AG04450 (cell line): ENCODE measurements at regions of chr11 and their contacts with region 1.

Region 1: DNA sequence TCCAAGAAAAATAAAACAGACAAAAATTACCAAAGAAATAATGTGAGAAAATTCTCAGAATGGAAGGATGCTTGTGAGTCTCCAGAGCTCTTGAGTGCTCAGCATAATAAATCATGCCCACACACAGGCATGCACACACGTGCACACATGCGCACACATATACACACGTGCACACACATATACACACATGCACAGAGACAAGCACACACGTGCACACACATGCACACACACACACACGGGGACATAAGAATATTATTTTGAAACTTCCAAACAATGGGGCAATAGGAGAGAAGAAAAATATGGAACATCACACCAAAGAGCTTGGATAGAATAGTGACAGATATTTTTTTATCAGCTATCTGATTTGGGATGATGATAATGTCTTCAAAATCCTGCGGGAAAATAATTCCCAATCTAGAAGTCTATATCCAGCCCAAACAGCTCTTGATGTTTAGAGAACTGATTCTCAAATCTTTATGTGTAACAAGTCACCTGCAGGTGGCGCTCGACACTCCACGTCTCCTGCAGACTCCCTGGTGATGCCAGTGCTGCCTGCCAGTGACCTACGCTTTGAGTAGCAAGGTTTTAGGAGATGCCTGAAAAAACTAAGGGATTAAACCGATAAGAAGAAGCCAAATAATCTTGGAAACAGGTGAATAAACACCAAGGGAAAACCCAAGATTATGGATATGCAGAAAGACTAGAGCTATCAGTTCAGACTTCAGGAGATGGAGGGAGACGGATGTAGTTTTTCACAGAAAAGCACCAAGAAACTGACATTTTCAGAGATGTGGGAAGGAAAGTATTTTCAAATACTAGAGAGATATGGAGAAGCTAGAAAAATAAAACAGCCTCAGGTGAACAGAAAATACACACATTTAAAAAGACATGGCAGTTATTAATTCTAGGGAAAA is 743.6 kb downstream of the ETS1 start:
- DNase-seq: peak; percentile 29
- H3K4me3 ChIP-seq: no peak overlapping the region
- H3K27ac ChIP-seq: no peak overlapping the region
- H3K27me3 ChIP-seq: no peaks in the 10 kb centered on the region
- CTCF ChIP-seq: peak; percentile 73

Region 2: GRCh38 chr11:127412722-127413380 is 430.9 kb before region 1 on chr11:
- CTCF ChIA-PET with region 1: no interaction called
- POLR2A ChIA-PET with region 1: no interaction called
- DNase-seq: no peak
- H3K4me3 ChIP-seq: no peak overlapping the region
- H3K27ac ChIP-seq: no peak overlapping the region
- H3K27me3 ChIP-seq: no peaks in the 10 kb centered on the region
- CTCF ChIP-seq: no peak

Region 3: GRCh38 chr11:127825183-127825582 is 18.6 kb before region 1 on chr11:
- CTCF ChIA-PET with region 1: interaction called, 22 read pairs
- POLR2A ChIA-PET with region 1: no interaction called
- DNase-seq: no peak
- H3K4me3 ChIP-seq: no peak overlapping the region
- H3K27ac ChIP-seq: no peak overlapping the region
- H3K27me3 ChIP-seq: no peaks in the 10 kb centered on the region
- CTCF ChIP-seq: no peak

Region 4: GRCh38 chr11:127862406-127862805 is 18.7 kb after region 1 on chr11:
- CTCF ChIA-PET with region 1: interaction called, 12 read pairs
- POLR2A ChIA-PET with region 1: no interaction called
- DNase-seq: no peak
- H3K4me3 ChIP-seq: no peak overlapping the region
- H3K27ac ChIP-seq: no peak overlapping the region
- H3K27me3 ChIP-seq: no peaks in the 10 kb centered on the region
- CTCF ChIP-seq: no peak

Region 5: DNA sequence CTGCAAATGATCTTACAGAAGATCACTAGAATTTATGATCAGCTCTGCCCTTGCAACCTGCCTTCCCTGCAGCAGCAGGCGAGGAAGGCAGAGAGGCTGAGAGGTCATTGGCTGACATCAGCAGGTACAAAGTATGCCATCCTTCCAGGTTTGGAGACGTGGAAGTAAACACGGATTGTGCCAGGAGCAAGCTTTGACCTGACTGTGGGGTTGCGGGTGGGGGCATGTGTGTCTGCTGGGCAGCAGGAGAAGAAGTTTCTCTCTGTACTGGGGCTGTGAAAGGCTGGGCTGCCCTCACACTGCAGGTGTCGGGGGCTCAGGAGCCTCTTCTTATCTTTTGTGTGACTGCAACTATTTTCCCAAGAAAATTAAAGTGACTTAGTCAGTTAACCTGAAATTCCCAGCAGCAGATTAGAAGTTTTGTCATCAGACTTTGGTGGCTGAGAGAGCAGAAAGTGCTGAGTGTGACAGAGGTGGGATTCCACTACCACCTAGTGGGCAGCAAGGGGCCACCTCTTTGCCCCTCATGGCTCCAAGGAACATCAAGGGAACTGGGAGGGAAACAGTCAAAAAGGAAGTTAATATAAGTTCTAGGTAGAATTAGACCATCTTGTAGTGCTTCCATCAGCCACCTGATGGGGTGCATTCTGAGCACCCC is 177.7 kb after region 1 on chr11:
- CTCF ChIA-PET with region 1: interaction called, 49 read pairs
- POLR2A ChIA-PET with region 1: no interaction called
- DNase-seq: no peak
- H3K4me3 ChIP-seq: no peak overlapping the region
- H3K27ac ChIP-seq: no peak overlapping the region
- H3K27me3 ChIP-seq: no peaks in the 10 kb centered on the region
- CTCF ChIP-seq: peak; percentile 39